Right ventricle myocardium superior (tissue), 1 donor: ENCODE measurements at regions of chr14 and their contacts with region 1.

Region 1: GRCh38 chr14:55270832-55271565 is at the start of gene FBXO34:
- DNase-seq: peak; percentile 100
- ATAC-seq: peak; percentile 94
- total RNA-seq, gene FBXO34: 24.6 TPM

Region 2: GRCh38 chr14:54652188-54652587 is 618.8 kb before region 1 on chr14:
- intact Hi-C with region 1: no loop called
- DNase-seq: peak; percentile 87
- ATAC-seq: peak; percentile 88

Region 3: GRCh38 chr14:55333711-55334485 is 62.9 kb after region 1 on chr14:
- intact Hi-C with region 1: no loop called
- DNase-seq: no peak
- ATAC-seq: no peak

Region 4: GRCh38 chr14:55354500-55354899 is 83.5 kb after region 1 on chr14:
- intact Hi-C with region 1: loop called (anchors 2 kb)
- DNase-seq: no peak
- ATAC-seq: peak; percentile 80

Region 5: DNA sequence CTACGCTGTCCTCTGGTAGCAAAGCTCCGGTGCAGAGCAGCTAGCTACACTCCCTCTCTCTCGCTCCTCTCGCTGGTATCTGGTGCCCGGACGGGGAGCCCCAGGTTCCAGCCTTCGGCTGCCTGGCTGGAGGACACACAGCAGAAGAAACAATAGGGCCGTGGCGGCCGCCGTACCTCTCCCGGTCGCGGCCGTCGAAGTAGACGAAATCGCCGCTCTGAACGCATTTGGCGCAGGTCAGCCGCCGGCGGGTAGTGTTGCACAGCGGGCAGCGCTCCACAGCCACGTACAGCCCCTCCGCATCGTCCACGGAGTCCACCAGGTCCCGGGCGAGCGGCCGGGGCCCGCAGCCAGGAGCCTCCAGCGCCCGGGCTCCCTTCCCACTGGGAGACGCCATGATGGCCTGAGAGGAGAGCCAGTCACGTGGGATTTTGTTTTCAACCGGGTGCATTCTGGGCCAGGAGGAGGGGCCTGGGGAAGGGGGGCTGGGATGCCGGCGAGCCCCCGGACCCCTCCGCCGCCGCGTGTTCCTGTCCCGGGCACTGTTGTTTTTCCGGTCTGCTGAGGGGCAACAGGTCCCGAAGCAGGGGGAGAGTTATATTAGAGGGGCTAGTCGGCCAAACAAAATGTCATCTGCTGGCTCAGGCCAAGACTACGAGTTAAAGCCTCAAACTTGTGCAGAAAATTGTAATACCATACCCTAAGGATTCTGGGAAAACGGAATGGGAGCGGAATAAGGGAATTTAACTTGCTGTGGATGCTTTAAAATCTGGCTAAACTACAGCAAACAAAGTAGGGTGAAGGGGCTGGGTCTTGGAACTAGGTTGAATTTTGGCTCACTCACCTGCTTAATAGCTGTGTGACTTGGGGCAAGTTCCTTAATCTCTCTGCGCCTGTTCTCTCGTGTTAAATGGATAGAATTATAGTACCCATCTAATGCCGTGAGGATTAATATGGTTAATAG is 140.7 kb after region 1 on chr14 and contains the start of gene ATG14:
- intact Hi-C with region 1: loop called (anchors 5 kb)
- DNase-seq: peak; percentile 88
- ATAC-seq: peak; percentile 100
- total RNA-seq, gene ATG14: 12.3 TPM